ENCODE measurements at regions of chr20 and their contacts with region 1.

Region 1: GRCh38 chr20:43426172-43426571 is 31.5 kb upstream of the SRSF6 start:
- DNase-seq: no peak
- H3K4me3 ChIP-seq: no peak overlapping the region
- CTCF ChIP-seq: no peak
- POLR2A ChIP-seq: no peak

Region 2: DNA sequence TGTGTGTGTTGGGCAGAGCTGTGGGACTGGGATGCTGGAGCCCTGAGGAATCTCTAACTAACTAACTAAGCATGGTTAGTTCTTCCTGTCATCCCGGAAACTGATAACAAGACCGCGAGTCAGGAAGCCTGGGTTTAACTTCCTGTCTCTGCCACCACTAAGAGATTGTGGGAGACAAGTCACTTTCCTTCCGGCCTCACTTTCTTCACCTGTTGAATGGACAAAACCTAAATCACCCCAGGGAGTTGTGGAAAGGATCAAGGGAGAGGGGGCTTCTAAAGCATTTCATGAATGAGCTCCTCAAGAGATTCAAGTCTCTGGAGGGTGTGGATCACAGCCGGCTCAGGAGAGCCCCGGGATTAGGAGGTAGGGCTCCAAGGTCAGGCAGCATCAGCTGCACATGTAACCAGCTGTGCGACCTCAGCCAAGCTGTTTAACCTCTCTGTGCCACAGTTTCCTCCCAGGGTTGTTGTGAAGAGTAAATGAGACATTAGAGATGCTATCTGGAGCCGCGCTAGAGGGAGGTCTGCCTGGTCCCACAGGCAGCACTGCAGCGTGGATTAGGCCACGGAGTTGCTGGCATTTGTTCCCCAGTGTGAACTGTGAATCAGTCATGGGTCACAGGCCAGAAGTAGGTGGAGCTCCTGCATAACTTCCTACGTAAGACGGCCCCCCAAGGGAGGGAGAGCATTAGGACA is 593.6 kb after region 1 on chr20:
- intact Hi-C with region 1: loop called (anchors 5 kb)
- DNase-seq: peak in 1 of 2 donors; percentile 64
- H3K4me3 ChIP-seq: no peak overlapping the region
- CTCF ChIP-seq: no peak
- POLR2A ChIP-seq: no peak

Region 3: DNA sequence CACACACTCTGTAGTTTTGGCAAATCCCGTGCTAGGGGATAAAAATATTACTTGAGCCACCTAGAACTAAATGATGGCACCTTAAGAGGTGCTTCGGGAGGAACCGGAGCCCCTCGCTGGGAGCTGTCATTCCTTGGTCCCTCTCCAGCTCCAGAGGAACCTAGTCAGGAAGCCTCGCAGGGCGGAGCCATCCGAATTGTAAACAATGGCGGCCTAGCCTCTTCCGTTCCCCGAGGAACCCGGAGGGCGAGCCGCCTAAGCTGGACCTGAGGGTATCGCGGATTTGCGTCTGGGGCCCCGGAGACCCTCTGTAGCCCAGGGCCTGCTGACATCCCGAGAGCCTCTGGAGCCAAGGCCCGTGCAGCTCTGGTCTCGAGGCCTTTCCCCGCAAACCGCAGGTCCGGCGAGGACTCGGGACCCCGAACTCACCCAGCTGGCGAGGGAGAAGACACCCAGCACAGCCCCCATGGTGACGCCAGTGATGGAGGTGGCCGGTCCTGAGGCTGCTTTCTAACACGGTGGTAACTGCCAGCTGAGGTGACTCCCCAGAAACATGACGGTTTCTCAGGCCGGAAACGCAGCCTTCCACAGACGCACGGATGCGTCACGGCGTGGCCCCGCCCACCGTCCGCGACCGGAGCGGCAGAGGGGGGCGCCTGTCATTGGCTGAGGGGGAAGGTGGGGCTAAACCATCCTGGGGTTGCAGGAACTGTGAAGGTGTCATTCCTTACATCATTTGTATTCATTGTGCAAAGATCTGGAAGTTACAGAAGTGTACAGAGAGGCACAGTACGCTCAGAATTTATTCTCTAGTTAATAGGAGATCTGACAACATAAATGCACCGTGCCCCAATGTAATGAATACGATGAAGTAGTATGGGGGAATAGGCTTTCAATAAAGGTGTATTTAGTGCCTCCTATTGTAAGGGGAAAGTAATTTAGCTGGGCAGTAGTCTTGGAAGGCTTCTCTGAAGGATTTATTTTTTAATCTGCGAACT is 1095.6 kb after region 1 on chr20 and contains the start of gene SERINC3:
- intact Hi-C with region 1: no loop called
- DNase-seq: peak; percentile 95 to 99
- H3K4me3 ChIP-seq: peak within 1 kb of the TSS; percentile 98
- CTCF ChIP-seq: no peak
- POLR2A ChIP-seq: peak in 1 of 2 donors; percentile 82
- total RNA-seq, gene SERINC3: 102 to 142 (median 124) TPM

Measured in lower leg skin (tissue), 4 donors.